ENCODE measurements at regions of chr4 and their contacts with region 1.

Region 1: GRCh38 chr4:146132445-146132844 is 43.1 kb upstream of the LSM6 start:
- DNase-seq: peak; percentile 73
- H3K4me3 Mint-ChIP-seq: peak overlapping the region; percentile 7
- H3K27ac Mint-ChIP-seq: peak overlapping the region; percentile 55
- H3K4me1 Mint-ChIP-seq: peaks cover 11% of the 10 kb centered on the region
- H3K27me3 Mint-ChIP-seq: peaks cover 6% of the 10 kb centered on the region

Region 2: GRCh38 chr4:146106556-146106955 is 25.9 kb before region 1 on chr4:
- intact Hi-C with region 1: loop called (anchors 1 kb)
- DNase-seq: no peak
- H3K4me3 Mint-ChIP-seq: no peak overlapping the region
- H3K27ac Mint-ChIP-seq: no peak overlapping the region
- H3K4me1 Mint-ChIP-seq: peaks cover 2% of the 10 kb centered on the region
- H3K27me3 Mint-ChIP-seq: peaks cover 2% of the 10 kb centered on the region

Region 3: DNA sequence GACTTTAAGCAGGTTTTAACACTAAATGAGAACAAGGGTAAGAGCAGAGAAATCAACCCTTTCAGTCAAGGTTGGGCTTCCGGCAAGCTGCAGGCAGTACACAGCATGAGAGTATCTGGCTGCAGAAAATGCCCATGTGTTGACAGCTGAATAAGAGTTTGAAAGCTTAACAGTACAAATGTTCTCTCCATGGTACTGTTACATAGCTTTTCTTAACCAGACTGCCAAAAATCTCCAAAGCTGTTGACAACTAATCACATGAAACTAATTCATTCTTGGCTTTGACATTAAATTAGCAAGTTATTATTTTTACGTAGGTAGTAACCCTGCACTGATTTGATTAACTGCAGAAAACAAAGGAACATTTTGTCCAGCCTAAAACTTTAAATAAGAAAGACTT is 235.8 kb after region 1 on chr4:
- intact Hi-C with region 1: no loop called
- DNase-seq: no peak
- H3K4me3 Mint-ChIP-seq: no peak overlapping the region
- H3K27ac Mint-ChIP-seq: no peak overlapping the region
- H3K4me1 Mint-ChIP-seq: peaks cover 5% of the 10 kb centered on the region
- H3K27me3 Mint-ChIP-seq: no peaks in the 10 kb centered on the region